ENCODE measurements at regions of chr3 and their contacts with region 1.

Region 1: GRCh38 chr3:195850857-195851543 is 39.3 kb upstream of the MUC4 start:
- DNase-seq: peak; percentile 86
- ATAC-seq: peak; percentile 90 to 92

Region 2: GRCh38 chr3:195558602-195559001 is 292.4 kb before region 1 on chr3:
- intact Hi-C with region 1: loop called in 1 of 2 experiments (anchors 2 kb)
- DNase-seq: no peak
- ATAC-seq: peak in 1 of 2 donors; percentile 48